SK-N-SH (cell line): ENCODE measurements at regions of chr3 and their contacts with region 1.

Region 1: GRCh38 chr3:69791919-69792399 is 52.7 kb downstream of the MITF start:
- DNase-seq: peak; percentile 28
- H3K4me3 ChIP-seq: no peak overlapping the region
- H3K27ac ChIP-seq: peak overlapping the region in 1 of 2 experiments; percentile 14; a peak in 1 of 4 replicates
- H3K4me1 ChIP-seq: peaks cover 3 to 6% of the 10 kb centered on the region in 2 experiments; a peak in 1 of 4 replicates
- H3K27me3 ChIP-seq: no peaks in the 10 kb centered on the region
- CTCF ChIP-seq: peak; percentile 71
- EP300 ChIP-seq: no peak
- RAD21 ChIP-seq: peak; percentile 83

Region 2: DNA sequence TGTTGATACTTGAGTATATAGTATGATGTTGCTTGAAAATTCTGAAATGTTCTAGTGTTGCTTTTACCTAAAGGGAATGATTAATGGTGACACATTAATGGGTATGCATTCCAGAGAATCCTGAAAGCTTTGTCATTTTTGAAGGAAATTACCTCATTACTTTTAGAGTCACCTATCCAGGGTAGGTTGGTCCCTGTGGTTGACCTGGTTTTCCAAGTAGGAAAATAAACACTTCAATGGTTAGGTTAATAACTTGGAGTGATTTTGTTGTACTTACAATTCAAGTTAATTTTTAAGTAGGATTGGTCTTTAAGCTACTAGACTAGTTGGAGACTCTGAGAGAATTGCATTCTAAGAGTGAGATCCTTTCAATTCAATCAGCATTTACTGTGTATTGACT is 21.7 kb before region 1 on chr3:
- CTCF ChIA-PET with region 1: interaction called, 10 read pairs
- POLR2A ChIA-PET with region 1: no interaction called
- DNase-seq: no peak
- H3K4me3 ChIP-seq: no peak overlapping the region
- H3K27ac ChIP-seq: peak overlapping the region in 1 of 2 experiments; percentile 52; a peak in 2 of 4 replicates
- H3K4me1 ChIP-seq: peaks cover 3 to 12% of the 10 kb centered on the region in 2 experiments; a peak in 3 of 4 replicates
- H3K27me3 ChIP-seq: no peaks in the 10 kb centered on the region
- CTCF ChIP-seq: no peak
- EP300 ChIP-seq: peak in 1 of 2 experiments; percentile 63; a peak in 2 of 4 replicates
- RAD21 ChIP-seq: no peak

Region 3: DNA sequence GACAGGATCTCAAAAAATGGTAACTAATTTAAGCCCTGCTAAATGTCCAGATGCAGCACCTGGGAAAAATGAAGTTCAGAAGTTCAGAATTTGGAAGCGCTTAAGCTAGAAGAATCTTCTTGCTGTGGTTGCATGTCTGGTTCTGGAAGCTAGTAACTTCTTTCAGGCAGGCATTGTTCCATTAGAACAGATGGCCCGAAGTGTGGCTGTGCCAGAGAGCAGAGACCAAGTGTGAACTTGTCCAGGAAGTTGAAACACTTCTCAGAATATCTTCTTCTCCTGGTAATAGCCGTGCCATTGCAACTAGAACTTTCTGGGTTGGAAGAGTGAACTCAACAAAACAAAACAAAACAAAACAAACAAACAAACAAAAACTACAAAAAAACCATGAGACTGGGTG is 27.3 kb after region 1 on chr3:
- CTCF ChIA-PET with region 1: no interaction called
- POLR2A ChIA-PET with region 1: no interaction called
- DNase-seq: no peak
- H3K4me3 ChIP-seq: no peak overlapping the region
- H3K27ac ChIP-seq: no peak overlapping the region
- H3K4me1 ChIP-seq: no peaks in the 10 kb centered on the region
- H3K27me3 ChIP-seq: no peaks in the 10 kb centered on the region
- CTCF ChIP-seq: no peak
- EP300 ChIP-seq: no peak
- RAD21 ChIP-seq: no peak